Lower leg skin (tissue), 4 donors: ENCODE measurements at regions of chr3 and their contacts with region 1.

Region 1: GRCh38 chr3:176286476-176287085 is 910.7 kb downstream of the TBL1XR1 start:
- DNase-seq: no peak
- H3K4me3 ChIP-seq: no peak overlapping the region
- CTCF ChIP-seq: no peak
- POLR2A ChIP-seq: no peak

Region 2: GRCh38 chr3:175977968-175978752 is 308.4 kb before region 1 on chr3:
- intact Hi-C with region 1: no loop called
- DNase-seq: peak in 1 of 2 donors; percentile 77
- H3K4me3 ChIP-seq: no peak overlapping the region
- CTCF ChIP-seq: no peak
- POLR2A ChIP-seq: no peak

Region 3: GRCh38 chr3:176097027-176097426 is 189.6 kb before region 1 on chr3:
- intact Hi-C with region 1: loop called (anchors 5 kb)
- DNase-seq: no peak
- H3K4me3 ChIP-seq: no peak overlapping the region
- CTCF ChIP-seq: no peak
- POLR2A ChIP-seq: no peak